RWPE1 (cell line): ENCODE measurements at regions of chr15 and their contacts with region 1.

Region 1: GRCh38 chr15:100650685-100651084 is 48.3 kb downstream of the ASB7 start:
- DNase-seq: peak; percentile 47
- H3K27ac ChIP-seq: no peak overlapping the region
- CTCF ChIP-seq: peak; percentile 54

Region 2: DNA sequence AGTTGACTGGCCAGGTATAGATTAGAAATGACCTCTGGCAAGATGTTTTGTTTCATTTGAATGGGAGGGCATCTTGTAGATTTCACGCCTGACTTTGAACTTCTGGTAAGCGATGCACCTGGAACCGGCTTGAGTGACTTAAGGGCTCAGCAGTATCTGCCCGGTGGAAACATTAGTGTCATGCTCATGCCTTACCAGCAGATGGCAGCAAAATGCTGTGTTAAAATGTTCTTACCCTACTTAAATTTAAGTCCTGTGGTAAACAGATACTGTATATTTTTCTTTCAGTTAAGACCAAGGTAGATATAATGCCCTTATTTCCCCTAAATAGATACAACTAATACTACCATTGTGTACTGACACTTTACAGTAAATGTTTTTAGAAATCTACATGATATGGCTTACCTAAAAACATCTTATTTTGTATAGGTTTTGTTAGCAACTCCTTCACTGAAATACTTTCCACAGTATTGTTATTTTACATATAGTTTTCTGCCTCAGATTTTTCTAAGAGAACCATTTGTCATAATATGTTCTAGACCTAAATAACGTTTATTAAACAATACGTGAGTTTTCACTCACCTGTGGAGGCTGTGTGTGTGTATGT is 22.8 kb before region 1 on chr15:
- CTCF ChIA-PET with region 1: no interaction called
- POLR2A ChIA-PET with region 1: interaction called, 10 read pairs
- DNase-seq: peak; percentile 69
- H3K27ac ChIP-seq: no peak overlapping the region
- CTCF ChIP-seq: peak; percentile 89

Region 3: DNA sequence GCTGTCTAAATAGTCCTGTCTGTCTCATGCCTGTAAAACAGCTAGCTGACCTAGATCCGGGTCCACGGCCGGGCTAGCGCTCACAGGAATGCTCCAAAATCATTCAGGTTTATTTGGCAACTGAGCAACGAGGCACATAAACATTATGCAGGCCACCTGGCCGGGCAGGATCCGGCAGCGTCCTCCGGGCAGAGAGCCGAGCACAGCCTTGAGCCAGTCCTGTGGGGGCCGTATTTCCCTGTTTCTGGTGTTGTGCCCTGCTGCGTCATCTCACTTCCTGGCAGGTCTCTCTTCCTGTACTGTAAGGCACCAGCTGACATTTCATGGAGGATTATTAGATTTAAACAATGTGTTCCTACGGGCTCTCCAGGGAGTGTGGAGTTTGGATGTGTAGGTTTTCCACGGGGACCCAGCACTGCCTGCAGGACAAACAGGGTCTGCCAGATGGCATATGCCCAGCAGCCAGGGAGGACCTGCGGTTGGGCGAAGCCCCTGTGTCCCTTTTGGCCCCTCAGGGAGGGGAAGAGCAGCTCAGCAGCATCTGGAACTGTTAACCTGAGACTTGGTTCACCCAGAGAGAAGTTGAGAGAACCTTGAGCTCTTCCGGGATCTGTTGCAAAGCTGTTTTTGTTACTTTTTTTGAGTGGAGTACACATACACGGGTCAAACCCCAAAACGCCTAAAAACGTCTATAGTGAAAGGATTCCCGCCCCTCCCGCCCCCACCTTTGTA is 251.9 kb after region 1 on chr15:
- CTCF ChIA-PET with region 1: no interaction called
- POLR2A ChIA-PET with region 1: no interaction called
- DNase-seq: peak; percentile 86
- H3K27ac ChIP-seq: peak overlapping the region; percentile 96
- CTCF ChIP-seq: no peak

Region 4: DNA sequence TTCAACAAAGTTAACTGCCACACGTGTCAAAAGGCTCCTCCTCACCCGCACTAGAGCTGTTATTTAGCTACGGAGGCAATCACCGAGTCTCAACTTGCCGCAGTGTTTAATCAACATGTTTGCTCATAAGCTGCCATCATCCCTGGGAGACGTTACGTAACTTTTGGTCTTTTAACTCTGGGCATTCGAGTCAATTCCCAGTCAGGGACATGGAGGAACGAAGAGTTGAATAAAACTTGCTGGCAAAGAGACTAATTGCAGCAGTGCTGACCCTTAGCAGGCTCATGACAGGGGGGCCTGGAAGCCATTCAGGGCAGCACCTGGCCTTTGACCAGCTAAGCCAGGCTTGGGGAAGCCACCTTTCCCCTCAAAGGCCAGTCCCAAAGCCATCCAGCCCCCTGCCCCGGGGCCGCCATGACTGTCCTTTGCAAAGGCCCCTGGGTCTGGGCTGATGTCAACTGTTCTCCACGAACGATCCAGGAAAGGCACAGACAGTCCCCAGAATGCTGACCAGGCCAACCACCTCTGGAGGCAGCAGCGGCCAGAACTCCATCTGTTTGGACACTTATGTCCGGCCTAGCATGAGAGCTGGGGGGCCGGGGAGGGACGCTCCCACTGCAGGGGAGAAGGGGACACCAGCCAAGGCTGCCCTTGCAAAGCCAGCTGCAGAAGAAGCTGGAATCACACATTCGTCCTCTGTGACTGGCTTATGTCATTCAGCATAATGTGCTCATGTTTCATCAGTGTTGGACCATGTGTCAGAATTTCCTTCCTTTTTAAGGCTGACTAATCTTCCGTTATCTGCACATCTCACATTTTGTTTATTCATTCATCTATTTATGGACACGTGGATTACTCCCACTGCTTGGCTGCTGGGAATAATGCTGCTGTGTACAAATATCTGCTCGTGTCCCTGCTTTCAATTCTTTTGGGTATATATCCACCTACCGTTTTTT is 795.2 kb after region 1 on chr15:
- CTCF ChIA-PET with region 1: no interaction called
- POLR2A ChIA-PET with region 1: no interaction called
- DNase-seq: peak; percentile 61
- H3K27ac ChIP-seq: peak overlapping the region; percentile 16; the same call in 1 of the 2 replicates
- CTCF ChIP-seq: no peak